IMR-90 (cell line): ENCODE measurements at regions of chr9 and their contacts with region 1.

Region 1: DNA sequence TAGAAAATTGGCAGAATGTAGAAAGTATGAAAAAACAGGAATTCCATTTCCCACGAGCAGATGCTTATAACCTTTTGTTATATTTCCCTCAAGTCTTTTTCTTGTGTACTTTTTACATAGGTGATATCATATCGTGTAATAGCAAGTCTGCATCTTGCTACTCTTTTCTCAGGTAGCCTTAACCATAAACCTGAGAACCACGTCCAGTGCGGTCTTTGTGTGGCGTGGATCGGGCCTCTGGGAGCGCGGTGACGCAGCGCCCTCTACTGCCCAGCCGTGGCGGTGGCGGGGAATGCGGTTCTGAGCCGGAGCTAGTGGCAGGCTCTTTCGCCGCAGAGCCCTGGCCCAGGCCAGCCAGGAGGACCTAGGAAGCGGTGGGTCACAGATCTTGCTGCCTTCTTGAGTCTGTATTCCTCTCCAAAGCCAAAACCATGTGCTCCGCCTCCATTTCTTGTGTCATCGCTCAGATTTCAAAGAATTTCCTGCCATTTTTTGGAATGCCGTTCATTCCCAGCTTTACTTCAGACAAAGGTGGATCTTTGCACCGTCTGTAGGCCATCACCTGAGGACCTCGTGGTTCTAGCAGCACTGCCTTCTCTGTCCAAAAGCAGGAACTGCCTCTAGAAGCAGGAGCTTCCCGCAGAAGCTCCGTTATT is 71.9 kb downstream of the MVB12B start:
- DNase-seq: peak; percentile 52
- ATAC-seq: peak; percentile 91
- H3K4me3 ChIP-seq: no peak overlapping the region
- H3K27ac ChIP-seq: no peak overlapping the region
- H3K4me1 ChIP-seq: peaks cover 8% of the 10 kb centered on the region
- H3K27me3 ChIP-seq: no peaks in the 10 kb centered on the region
- CTCF ChIP-seq: peak; percentile 97
- POLR2A ChIP-seq: no peak
- RAD21 ChIP-seq: peak; percentile 97

Region 2: DNA sequence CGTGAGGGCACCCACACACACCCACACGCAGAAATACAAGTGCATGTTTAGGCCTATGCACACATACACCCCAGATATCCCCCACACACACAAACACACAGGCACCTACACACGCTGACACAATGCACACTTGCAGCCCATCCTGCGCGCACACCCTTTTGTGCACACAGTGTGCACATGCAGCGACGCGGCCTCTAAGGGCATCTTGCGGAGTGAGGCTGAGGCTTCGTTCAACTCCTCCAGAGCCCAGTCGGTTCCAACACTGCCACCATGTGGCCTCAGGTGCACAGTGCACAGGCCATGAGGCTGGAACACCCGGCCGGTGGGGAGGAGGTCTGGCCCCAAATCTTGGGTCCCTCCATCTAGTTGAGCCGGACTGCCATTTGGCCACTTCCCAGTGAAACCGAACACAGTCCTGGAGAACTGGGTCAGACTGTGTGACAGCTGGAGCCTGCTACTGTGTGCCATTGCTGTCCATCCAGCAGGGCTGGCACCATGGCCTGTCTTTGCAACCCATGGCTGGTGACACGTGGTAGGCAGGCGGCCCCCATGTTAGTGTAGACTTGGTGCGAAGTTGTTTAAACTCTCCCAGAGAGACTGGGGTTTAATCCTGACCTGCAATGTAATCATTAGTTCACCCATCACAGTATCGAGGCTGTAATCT is 169.6 kb before region 1 on chr9:
- CTCF ChIA-PET with region 1: no interaction called
- POLR2A ChIA-PET with region 1: no interaction called
- dilution Hi-C with region 1: no loop called
- in situ Hi-C with region 1: no loop called
- intact Hi-C with region 1: loop called (anchors 1 kb)
- DNase-seq: peak; percentile 57
- ATAC-seq: peak; percentile 100
- H3K4me3 ChIP-seq: no peak overlapping the region
- H3K27ac ChIP-seq: no peak overlapping the region
- H3K4me1 ChIP-seq: no peaks in the 10 kb centered on the region
- H3K27me3 ChIP-seq: peaks cover 58% of the 10 kb centered on the region
- CTCF ChIP-seq: peak; percentile 88
- POLR2A ChIP-seq: no peak
- RAD21 ChIP-seq: peak; percentile 91

Region 3: DNA sequence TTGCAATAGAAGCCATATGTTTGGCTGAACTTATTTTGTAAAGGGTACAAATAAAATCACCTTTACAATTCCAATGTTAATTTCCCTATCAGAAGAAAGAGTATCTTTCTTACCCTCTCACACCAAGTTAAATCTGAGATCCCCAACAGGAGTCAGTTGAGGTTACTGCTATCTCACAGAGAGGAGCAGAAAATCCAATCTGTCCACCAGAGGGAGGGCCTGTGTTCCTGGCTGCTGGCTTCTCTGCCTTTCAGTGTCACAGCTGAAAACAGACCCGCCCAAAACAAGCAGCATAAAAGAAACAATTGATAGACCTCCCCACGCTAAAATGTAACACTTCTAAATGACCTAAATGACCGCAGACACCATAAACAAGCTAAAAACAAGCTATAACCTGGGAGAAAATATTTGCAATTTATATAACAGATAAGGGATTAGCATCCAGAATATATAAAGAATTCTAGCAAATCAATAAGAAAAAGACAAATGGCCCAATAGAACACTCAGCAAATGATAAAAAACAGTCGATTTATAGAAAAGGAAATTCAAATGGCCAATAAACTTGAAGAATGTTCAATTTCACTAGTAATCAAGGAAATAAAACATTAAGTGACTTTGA is 96.4 kb before region 1 on chr9:
- CTCF ChIA-PET with region 1: interaction called, 14 read pairs
- POLR2A ChIA-PET with region 1: no interaction called
- dilution Hi-C with region 1: no loop called
- in situ Hi-C with region 1: loop called (anchors 5 kb)
- intact Hi-C with region 1: loop called (anchors 1 kb)
- DNase-seq: peak; percentile 62
- ATAC-seq: peak; percentile 85
- H3K4me3 ChIP-seq: no peak overlapping the region
- H3K27ac ChIP-seq: no peak overlapping the region
- H3K4me1 ChIP-seq: no peaks in the 10 kb centered on the region
- H3K27me3 ChIP-seq: peaks cover 46% of the 10 kb centered on the region
- CTCF ChIP-seq: peak; percentile 74
- POLR2A ChIP-seq: no peak
- RAD21 ChIP-seq: peak; percentile 72

Region 4: DNA sequence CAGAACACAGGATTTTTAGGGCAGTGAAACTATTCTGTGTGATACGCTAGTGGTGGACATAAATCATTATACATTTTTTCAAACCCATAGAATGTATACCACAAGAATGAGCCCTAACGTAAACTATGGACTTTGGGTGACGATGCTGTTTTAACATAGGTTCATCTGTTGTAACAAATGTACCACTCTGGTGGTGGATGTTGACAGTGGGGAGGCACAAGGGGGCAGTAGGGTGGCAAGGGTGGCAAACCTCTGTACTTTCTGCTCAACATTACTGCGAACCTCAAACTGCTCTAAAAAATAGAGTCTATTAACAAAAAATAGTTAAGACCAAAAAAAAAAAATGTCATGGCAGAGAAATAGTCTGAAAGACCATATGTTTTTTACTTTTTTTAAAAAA is 81.0 kb before region 1 on chr9:
- CTCF ChIA-PET with region 1: interaction called, 10 read pairs
- POLR2A ChIA-PET with region 1: no interaction called
- dilution Hi-C with region 1: no loop called
- in situ Hi-C with region 1: no loop called
- intact Hi-C with region 1: loop called (anchors 1 kb)
- DNase-seq: peak; percentile 25
- ATAC-seq: 0 out of 2 replicates have a peak, but pooled peaks have one; percentile 29
- H3K4me3 ChIP-seq: no peak overlapping the region
- H3K27ac ChIP-seq: no peak overlapping the region
- H3K4me1 ChIP-seq: no peaks in the 10 kb centered on the region
- H3K27me3 ChIP-seq: peaks cover 26% of the 10 kb centered on the region
- CTCF ChIP-seq: peak; percentile 40
- POLR2A ChIP-seq: no peak
- RAD21 ChIP-seq: peak; percentile 40

Region 5: GRCh38 chr9:126490871-126491567 is 92.5 kb after region 1 on chr9:
- CTCF ChIA-PET with region 1: interaction called, 7 read pairs
- POLR2A ChIA-PET with region 1: no interaction called
- dilution Hi-C with region 1: no loop called
- in situ Hi-C with region 1: no loop called
- intact Hi-C with region 1: loop called (anchors 2 kb)
- DNase-seq: peak; percentile 69
- ATAC-seq: peak; percentile 91
- H3K4me3 ChIP-seq: no peak overlapping the region
- H3K27ac ChIP-seq: no peak overlapping the region
- H3K4me1 ChIP-seq: no peaks in the 10 kb centered on the region
- H3K27me3 ChIP-seq: no peaks in the 10 kb centered on the region
- CTCF ChIP-seq: peak; percentile 92
- POLR2A ChIP-seq: 0 out of 2 replicates have a peak, but pooled peaks have one; percentile 34
- RAD21 ChIP-seq: peak; percentile 95